Dorsolateral prefrontal cortex (tissue), 120 donors: ENCODE measurements at regions of chr10 and their contacts with region 1.

Region 1: GRCh38 chr10:124741281-124741921 is 2.8 kb downstream of the FAM53B start:
- DNase-seq: peak; percentile 79 to 94 (median 90)
- H3K4me3 ChIP-seq: peak overlapping the region in 58 of 59 donors; percentile 62 to 90 (median 79)
- H3K27ac ChIP-seq: peak overlapping the region; percentile 87 to 100 (median 95)
- H3K27me3 ChIP-seq: no peaks in the 10 kb centered on the region
- CTCF ChIP-seq: peak; percentile 71 to 98 (median 91)

Region 2: GRCh38 chr10:124539935-124540641 is 201.3 kb before region 1 on chr10:
- intact Hi-C with region 1: loop called in 1 of 2 experiments (anchors 5 kb)
- DNase-seq: peak in 7 of 10 donors; percentile 55 to 81 (median 63)
- H3K4me3 ChIP-seq: no peak overlapping the region
- H3K27ac ChIP-seq: peak overlapping the region in 27 of 59 donors; percentile 3 to 79 (median 42)
- H3K27me3 ChIP-seq: no peaks in the 10 kb centered on the region
- CTCF ChIP-seq: peak; percentile 16 to 93 (median 72)

Region 3: DNA sequence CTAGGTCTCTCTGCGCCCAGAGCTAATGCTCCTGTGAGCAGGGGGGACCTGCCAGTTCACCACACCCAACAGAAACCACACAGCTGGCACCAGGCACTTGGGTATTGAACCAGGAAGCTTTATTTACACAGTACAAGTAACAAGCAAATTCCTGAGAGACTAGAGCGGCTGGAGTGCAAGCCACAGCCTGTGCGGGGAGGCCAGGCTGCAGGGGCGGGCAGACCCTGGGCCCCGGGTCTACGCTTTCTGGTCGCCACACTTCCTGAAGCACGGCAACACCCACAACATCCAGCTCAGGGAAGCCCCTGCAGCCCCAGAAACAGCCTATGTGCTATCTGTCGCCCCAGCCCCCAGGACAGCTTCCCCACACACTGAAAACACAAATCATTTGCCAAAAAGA is 122.2 kb before region 1 on chr10:
- intact Hi-C with region 1: loop called in 1 of 2 experiments (anchors 5 kb)
- DNase-seq: no peak
- H3K4me3 ChIP-seq: no peak overlapping the region
- H3K27ac ChIP-seq: peak overlapping the region in 56 of 59 donors; percentile 56 to 98 (median 92)
- H3K27me3 ChIP-seq: no peaks in the 10 kb centered on the region
- CTCF ChIP-seq: no peak

Region 4: GRCh38 chr10:124647421-124648130 is 93.8 kb before region 1 on chr10:
- intact Hi-C with region 1: loop called in 1 of 2 experiments (anchors 5 kb)
- DNase-seq: peak in 1 of 10 donors; percentile 68
- H3K4me3 ChIP-seq: peak overlapping the region in 1 of 59 donors; percentile 27
- H3K27ac ChIP-seq: peak overlapping the region; percentile 79 to 99 (median 95)
- H3K27me3 ChIP-seq: no peaks in the 10 kb centered on the region
- CTCF ChIP-seq: peak in 37 of 56 donors; percentile 11 to 48 (median 29)

Region 5: GRCh38 chr10:124688889-124689670 is 52.3 kb before region 1 on chr10:
- intact Hi-C with region 1: loop called (anchors 5 kb)
- DNase-seq: no peak
- H3K4me3 ChIP-seq: no peak overlapping the region
- H3K27ac ChIP-seq: peak overlapping the region; percentile 13 to 100 (median 98)
- H3K27me3 ChIP-seq: no peaks in the 10 kb centered on the region
- CTCF ChIP-seq: no peak

Region 6: GRCh38 chr10:124722798-124723783 is 18.3 kb before region 1 on chr10:
- intact Hi-C with region 1: loop called in 1 of 2 experiments (anchors 2 kb)
- DNase-seq: peak in 4 of 10 donors; percentile 38 to 58 (median 52)
- H3K4me3 ChIP-seq: peak overlapping the region in 2 of 59 donors; percentile 5 to 17
- H3K27ac ChIP-seq: peak overlapping the region; percentile 82 to 100 (median 98)
- H3K27me3 ChIP-seq: no peaks in the 10 kb centered on the region
- CTCF ChIP-seq: peak in 2 of 56 donors; percentile 9 to 12